ENCODE measurements at regions of chr1 and their contacts with region 1.

Region 1: GRCh38 chr1:155989242-155990004 is 11.1 kb upstream of the ARHGEF2 start:
- DNase-seq: peak; percentile 68 to 87 (median 76)
- H3K4me3 ChIP-seq: peak overlapping the region in 1 of 4 donors; percentile 39
- H3K27ac ChIP-seq: peak overlapping the region in 1 of 5 donors; percentile 45
- H3K4me1 ChIP-seq: peaks cover 7 to 20% of the 10 kb centered on the region in 2 donors
- H3K27me3 ChIP-seq: no peaks in the 10 kb centered on the region
- CTCF ChIP-seq: peak; percentile 97 to 99 (median 98)
- POLR2A ChIP-seq: no peak

Region 2: GRCh38 chr1:155934097-155934935 is 55.1 kb before region 1 on chr1 and contains the start of gene KHDC4:
- intact Hi-C with region 1: loop called in 1 of 2 experiments (anchors 2 kb)
- DNase-seq: peak; percentile 95 to 99 (median 97)
- H3K4me3 ChIP-seq: peak within 1 kb of the TSS; percentile 36 to 81 (median 48)
- H3K27ac ChIP-seq: peak within 1 kb of the TSS; percentile 70 to 94 (median 87)
- H3K4me1 ChIP-seq: peaks cover 39 to 53% of the 10 kb centered on the region in 2 donors
- H3K27me3 ChIP-seq: no peaks in the 10 kb centered on the region
- CTCF ChIP-seq: peak in 3 of 6 experiments; percentile 4 to 23 (median 6)
- POLR2A ChIP-seq: peak; percentile 93 to 99
- total RNA-seq, gene KHDC4: 16.8 to 52.9 (median 39.6) TPM

Region 3: GRCh38 chr1:155940531-155940992 is 48.9 kb before region 1 on chr1:
- intact Hi-C with region 1: loop called (anchors 2 kb)
- DNase-seq: peak; percentile 61 to 80 (median 71)
- H3K4me3 ChIP-seq: no peak overlapping the region
- H3K27ac ChIP-seq: peak overlapping the region in 4 of 5 donors; percentile 29 to 86 (median 55)
- H3K4me1 ChIP-seq: peaks cover 19 to 35% of the 10 kb centered on the region in 2 donors
- H3K27me3 ChIP-seq: no peaks in the 10 kb centered on the region
- CTCF ChIP-seq: no peak
- POLR2A ChIP-seq: no peak

Measured in adrenal gland (tissue), 19 donors.